Prostate gland (tissue), 2 donors: ENCODE measurements at regions of chrX and their contacts with region 1.

Region 1: DNA sequence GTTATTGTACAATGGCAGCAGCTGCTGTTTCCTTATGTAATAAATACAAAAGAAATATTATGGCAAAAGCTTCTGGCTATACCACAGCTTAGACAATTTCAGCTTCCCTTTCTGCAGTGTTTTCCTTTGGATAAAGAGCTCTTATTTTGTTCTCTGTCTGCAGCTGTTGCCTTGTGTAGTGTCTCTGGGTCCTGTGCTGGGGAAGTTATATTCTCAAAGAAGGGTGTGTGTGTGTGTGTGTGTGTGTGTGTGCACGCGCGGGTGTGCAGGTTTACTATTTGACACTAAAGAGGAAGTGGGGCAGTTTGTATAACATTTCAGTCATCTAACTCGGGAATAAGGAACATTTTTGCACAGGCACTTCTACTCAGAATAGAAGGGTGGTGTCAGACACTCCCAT is 83.6 kb downstream of the REPS2 start:
- DNase-seq: no peak
- H3K4me3 ChIP-seq: no peak overlapping the region
- H3K27ac ChIP-seq: no peak overlapping the region
- H3K4me1 ChIP-seq: no peaks in the 10 kb centered on the region
- H3K27me3 ChIP-seq: no peaks in the 10 kb centered on the region
- CTCF ChIP-seq: no peak
- POLR2A ChIP-seq: no peak

Region 2: DNA sequence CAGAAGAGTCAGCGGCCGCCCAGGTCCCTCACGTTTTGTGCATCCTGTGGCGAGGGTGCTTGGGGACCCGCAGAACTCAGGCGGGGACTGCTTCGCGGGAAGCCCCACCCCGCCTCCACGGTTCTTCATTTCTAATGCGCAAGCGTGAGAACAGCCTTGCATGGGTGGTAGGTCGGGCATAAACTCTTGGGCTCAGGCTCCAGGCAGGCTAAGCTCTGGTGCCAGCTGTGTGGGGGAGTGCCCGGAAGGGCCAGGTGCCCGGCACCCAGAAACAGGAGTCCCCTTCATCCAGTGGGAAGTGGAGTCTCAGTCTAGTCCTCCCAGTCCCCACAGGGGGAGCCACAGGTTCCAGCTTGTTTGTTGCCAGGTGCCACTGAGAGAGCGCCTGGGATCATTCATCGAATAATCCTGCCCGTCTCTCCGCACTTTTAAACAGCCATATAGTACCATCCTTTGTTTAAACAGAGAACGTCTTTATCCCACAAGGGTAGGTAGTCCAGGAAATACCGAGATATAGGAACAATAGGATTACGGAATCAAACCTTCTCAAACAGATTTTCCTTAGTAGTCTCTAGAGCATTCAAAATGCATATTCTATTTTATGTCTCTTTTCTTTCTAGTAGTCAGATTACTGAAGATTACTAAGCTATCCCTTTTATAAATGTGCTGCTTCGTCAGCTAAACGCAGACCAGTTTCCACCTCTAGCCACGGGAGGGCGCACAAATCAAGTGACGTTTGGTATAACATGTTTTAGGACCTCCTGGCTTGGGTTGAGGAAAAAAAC is 147.2 kb before region 1 on chrX:
- intact Hi-C with region 1: no loop called
- DNase-seq: peak; percentile 36
- H3K4me3 ChIP-seq: peak overlapping the region; percentile 25 to 36
- H3K27ac ChIP-seq: peak overlapping the region; percentile 69 to 75
- H3K4me1 ChIP-seq: no peaks in the 10 kb centered on the region
- H3K27me3 ChIP-seq: no peaks in the 10 kb centered on the region
- CTCF ChIP-seq: peak; percentile 12 to 63 (median 50)
- POLR2A ChIP-seq: no peak

Region 3: DNA sequence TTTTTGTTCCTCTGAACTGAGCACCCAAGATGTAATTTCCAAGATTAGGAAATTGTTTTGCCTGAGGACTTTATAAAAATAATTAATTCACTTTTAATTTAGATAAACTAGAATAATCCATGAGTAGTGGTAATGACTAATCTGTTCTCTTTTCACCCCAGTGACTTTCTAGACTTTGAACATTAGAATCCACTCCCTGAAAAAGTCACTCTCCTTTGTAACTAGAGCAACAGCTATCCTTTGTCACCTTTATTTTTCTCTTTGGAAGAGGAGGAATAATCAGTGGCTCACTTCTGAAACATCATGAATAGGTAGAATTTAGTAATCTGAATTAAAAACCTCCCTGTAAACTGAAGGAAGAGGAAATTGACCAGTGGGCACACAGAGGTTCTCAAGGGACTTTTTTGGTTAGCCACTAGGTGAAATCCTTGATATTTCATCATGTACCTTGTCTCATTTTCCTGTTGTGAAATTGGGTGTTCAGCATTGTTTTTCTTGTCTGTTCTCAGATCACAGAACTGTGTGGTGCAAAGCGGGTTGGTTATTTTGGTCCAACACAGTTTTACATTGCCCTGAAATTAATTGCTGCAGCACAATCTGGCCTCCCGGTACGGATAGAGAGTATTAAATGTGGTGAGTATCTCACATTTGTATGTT is 24.3 kb before region 1 on chrX:
- intact Hi-C with region 1: loop called (anchors 2 kb)
- DNase-seq: no peak
- H3K4me3 ChIP-seq: no peak overlapping the region
- H3K27ac ChIP-seq: no peak overlapping the region
- H3K4me1 ChIP-seq: no peaks in the 10 kb centered on the region
- H3K27me3 ChIP-seq: no peaks in the 10 kb centered on the region
- CTCF ChIP-seq: no peak
- POLR2A ChIP-seq: no peak